Activated B cell treated with CpG ODN at 0.5 μM for 24 hours (primary cell): ENCODE measurements at regions of chr10 and their contacts with region 1.

Region 1: GRCh38 chr10:129605986-129606518 is 139.0 kb downstream of the MGMT start:
- DNase-seq: no peak
- ATAC-seq: peak; percentile 74
- H3K4me3 Mint-ChIP-seq: peak overlapping the region; percentile 81
- H3K27ac Mint-ChIP-seq: peak overlapping the region; percentile 85
- H3K4me1 Mint-ChIP-seq: peaks cover 47% of the 10 kb centered on the region
- H3K27me3 Mint-ChIP-seq: no peaks in the 10 kb centered on the region
- CTCF ChIP-seq: no peak

Region 2: DNA sequence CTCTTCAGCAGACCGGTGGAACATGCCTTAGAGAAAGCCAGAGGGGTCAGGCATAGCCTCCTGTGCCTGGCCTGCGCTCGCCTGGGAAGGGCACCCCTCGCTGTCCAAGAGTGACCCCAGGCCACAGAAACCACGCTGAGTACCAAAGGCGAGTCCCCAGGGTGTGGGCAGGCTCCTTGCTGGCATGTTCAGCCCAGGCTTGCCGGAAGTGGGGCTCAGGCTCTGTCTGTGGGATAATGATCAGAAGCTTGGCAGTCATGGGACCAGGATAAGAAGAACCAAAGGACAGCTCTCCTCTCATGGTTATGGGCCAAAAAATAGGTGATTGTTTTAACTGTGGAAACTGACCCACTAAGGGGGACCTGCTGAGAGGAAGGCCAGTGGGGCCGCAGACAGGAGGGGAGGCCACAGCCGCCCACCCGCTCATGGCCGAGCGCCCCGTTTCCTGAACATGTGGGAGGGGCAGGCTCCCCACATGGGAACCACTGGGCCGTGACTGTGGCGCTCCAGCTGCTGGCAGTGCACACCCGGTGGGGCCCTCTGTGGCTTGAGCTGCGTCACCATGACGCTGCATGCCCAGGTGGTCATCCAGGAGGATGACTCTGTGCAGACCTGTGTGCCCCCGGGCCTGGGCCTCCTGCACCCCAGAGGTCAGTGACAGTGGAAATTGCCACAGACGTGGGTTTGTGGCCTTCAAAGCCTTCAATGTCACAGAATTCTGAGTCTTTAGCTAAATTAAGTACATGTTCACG is 54.1 kb before region 1 on chr10:
- CTCF ChIA-PET with region 1: no interaction called
- POLR2A ChIA-PET with region 1: no interaction called
- intact Hi-C with region 1: loop called (anchors 1 kb)
- DNase-seq: peak; percentile 30
- ATAC-seq: peak; percentile 75
- H3K4me3 Mint-ChIP-seq: peak overlapping the region; percentile 6
- H3K27ac Mint-ChIP-seq: peak overlapping the region; percentile 38
- H3K4me1 Mint-ChIP-seq: peaks cover 19% of the 10 kb centered on the region
- H3K27me3 Mint-ChIP-seq: no peaks in the 10 kb centered on the region
- CTCF ChIP-seq: no peak